Breast epithelium (tissue), 4 donors: ENCODE measurements at regions of chr12 and their contacts with region 1.

Region 1: GRCh38 chr12:118436002-118436730 is 59.8 kb downstream of the SUDS3 start:
- DNase-seq: no peak
- H3K4me3 ChIP-seq: no peak overlapping the region
- H3K27ac ChIP-seq: no peak overlapping the region
- H3K4me1 ChIP-seq: no peaks in the 10 kb centered on the region
- H3K27me3 ChIP-seq: no peaks in the 10 kb centered on the region
- CTCF ChIP-seq: no peak
- POLR2A ChIP-seq: no peak

Region 2: GRCh38 chr12:118689793-118690192 is 253.6 kb after region 1 on chr12:
- intact Hi-C with region 1: loop called (anchors 5 kb)
- DNase-seq: no peak
- H3K4me3 ChIP-seq: no peak overlapping the region
- H3K27ac ChIP-seq: no peak overlapping the region
- H3K4me1 ChIP-seq: no peaks in the 10 kb centered on the region
- H3K27me3 ChIP-seq: no peaks in the 10 kb centered on the region
- CTCF ChIP-seq: no peak
- POLR2A ChIP-seq: no peak